ENCODE measurements at regions of chr4 and their contacts with region 1.

Region 1: DNA sequence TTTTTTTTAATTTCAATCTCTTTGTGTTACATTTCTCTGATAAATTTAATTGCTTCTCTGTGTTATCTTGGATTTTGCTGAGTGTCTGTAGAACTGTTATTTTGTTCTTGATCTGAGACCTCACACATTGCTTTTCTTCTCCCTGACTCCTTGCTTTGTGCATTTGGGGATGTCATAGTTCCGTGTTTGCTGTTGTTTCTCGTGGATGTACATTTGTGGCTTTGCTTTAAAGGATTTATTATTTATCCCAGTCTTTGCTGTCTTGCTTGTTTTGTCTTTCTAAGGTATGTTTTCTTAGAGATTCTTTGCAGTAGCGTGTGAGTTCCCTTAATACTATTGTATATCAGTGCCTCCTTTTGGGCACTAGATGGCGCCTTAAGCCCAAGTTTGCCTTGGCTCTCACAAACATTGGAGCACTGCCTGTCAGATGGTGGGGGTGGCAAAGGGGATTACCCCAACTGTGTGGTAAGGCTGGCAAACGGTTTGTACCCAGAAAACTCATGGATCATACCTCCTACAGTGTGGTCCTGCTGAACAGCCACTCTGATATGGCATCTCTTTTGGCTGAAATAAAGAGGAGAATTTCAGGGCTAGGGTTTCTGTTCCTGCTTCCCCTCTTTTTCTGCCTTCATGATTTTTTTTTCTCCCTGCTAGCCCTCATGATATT is 96.4 kb downstream of the PGRMC2 start:
- DNase-seq: peak; percentile 84
- ATAC-seq: peak; percentile 100
- H3K4me3 Mint-ChIP-seq: no peak overlapping the region
- H3K27ac Mint-ChIP-seq: no peak overlapping the region
- H3K4me1 Mint-ChIP-seq: no peaks in the 10 kb centered on the region
- H3K27me3 Mint-ChIP-seq: no peaks in the 10 kb centered on the region

Region 2: DNA sequence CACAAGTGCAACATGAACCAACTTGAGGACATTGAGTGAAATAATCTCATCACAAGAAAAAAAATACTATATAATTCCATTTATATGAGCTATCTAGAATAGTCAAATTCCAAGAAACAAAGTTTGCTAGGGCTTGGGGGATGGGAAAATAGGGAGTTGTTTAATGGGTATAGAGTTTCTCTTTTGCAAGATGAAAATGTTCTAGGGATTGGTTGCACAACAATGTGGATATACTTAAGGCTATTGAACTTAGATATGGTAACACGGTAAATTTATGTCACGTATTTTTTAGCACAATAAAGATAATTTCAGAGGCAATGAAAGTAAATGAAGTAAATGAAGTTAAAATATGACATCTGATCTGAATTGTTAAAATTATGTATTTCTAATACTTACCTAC is 234.1 kb before region 1 on chr4:
- CTCF ChIA-PET with region 1: no interaction called
- POLR2A ChIA-PET with region 1: no interaction called
- intact Hi-C with region 1: no loop called
- DNase-seq: no peak
- ATAC-seq: no peak
- H3K4me3 Mint-ChIP-seq: no peak overlapping the region
- H3K27ac Mint-ChIP-seq: no peak overlapping the region
- H3K4me1 Mint-ChIP-seq: peaks cover 8% of the 10 kb centered on the region
- H3K27me3 Mint-ChIP-seq: no peaks in the 10 kb centered on the region

Region 3: DNA sequence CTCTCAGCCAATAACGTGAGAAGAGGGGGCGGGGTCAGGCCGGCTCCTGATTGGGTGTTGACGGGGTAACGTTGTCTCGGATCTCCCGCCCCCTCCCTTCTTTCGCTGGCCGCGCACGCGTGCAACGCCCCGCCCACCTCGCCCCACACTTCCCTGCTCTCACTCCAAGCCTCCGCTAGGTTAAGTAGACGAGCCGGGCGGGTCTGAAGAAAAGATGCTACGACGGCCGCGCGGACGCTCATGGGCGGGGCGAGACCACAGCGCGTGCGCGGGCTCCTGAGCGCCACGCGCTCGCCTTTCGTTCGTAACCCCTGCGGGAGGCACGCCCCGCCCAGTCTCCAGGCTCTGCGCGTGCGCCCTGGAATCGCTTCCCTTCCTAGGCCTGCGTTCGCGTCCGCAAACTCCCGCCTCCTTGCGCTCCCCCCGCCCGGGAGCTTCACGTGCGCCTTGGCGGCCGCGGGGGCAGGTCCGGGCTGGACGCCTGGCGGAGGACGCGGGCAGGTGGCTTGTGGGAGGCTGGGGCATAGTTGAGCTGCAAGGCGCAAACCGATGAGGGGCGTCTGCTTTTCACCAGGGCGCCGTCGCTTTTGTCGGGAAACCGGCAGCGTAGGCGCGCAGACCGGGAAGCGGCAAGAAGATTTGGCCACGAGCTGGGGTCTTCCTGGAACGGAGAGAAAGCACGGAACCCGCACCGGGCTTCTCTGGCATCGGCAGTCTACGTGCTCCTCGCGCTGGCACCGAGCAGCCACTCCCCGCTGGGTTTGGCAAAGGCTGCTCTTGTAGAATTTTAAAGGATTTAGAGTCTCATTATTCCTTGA is 96.8 kb after region 1 on chr4:
- CTCF ChIA-PET with region 1: no interaction called
- POLR2A ChIA-PET with region 1: interaction called, 4 read pairs
- intact Hi-C with region 1: loop called in 1 of 2 experiments (anchors 5 kb)
- DNase-seq: peak; percentile 100
- ATAC-seq: peak; percentile 85
- H3K4me3 Mint-ChIP-seq: peak overlapping the region; percentile 79
- H3K27ac Mint-ChIP-seq: peak overlapping the region; percentile 93
- H3K4me1 Mint-ChIP-seq: peaks cover 27% of the 10 kb centered on the region
- H3K27me3 Mint-ChIP-seq: no peaks in the 10 kb centered on the region

Region 4: GRCh38 chr4:128553686-128554515 is 362.7 kb after region 1 on chr4:
- CTCF ChIA-PET with region 1: no interaction called
- POLR2A ChIA-PET with region 1: no interaction called
- intact Hi-C with region 1: loop called in 1 of 2 experiments (anchors 5 kb)
- DNase-seq: no peak
- ATAC-seq: peak; percentile 8
- H3K4me3 Mint-ChIP-seq: peak overlapping the region; percentile 76
- H3K27ac Mint-ChIP-seq: no peak overlapping the region
- H3K4me1 Mint-ChIP-seq: peaks cover 13% of the 10 kb centered on the region
- H3K27me3 Mint-ChIP-seq: peaks cover 8% of the 10 kb centered on the region

Region 5: GRCh38 chr4:128863312-128864075 is 672.2 kb after region 1 on chr4:
- CTCF ChIA-PET with region 1: interaction called, 3 read pairs
- POLR2A ChIA-PET with region 1: no interaction called
- intact Hi-C with region 1: loop called (anchors 1 kb)
- DNase-seq: peak; percentile 79
- ATAC-seq: no peak
- H3K4me3 Mint-ChIP-seq: no peak overlapping the region
- H3K27ac Mint-ChIP-seq: peak overlapping the region; percentile 80
- H3K4me1 Mint-ChIP-seq: peaks cover 46% of the 10 kb centered on the region
- H3K27me3 Mint-ChIP-seq: no peaks in the 10 kb centered on the region

Region 6: DNA sequence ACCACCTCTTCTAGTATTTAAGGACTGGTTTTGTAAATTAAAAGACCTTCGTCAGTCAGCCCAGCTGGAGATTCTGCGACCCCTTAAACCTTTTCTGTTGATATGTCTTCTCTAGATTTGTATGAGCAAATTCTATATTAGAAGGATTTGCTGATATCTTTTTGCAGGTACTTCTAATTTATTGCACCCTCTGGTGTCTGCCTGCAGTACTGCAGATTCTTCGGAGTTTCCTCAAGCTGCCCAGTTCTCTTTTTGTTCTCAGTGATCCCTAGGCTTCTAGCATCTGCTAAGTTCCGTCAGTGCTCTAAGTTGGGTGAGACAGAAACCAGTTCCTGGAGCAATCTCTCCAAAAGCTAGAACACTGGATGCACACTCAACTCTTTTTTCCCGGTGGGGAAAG is 1449.9 kb after region 1 on chr4:
- CTCF ChIA-PET with region 1: no interaction called
- POLR2A ChIA-PET with region 1: no interaction called
- intact Hi-C with region 1: loop called in 1 of 2 experiments (anchors 10 kb)
- DNase-seq: peak; percentile 70
- ATAC-seq: no peak
- H3K4me3 Mint-ChIP-seq: no peak overlapping the region
- H3K27ac Mint-ChIP-seq: no peak overlapping the region
- H3K4me1 Mint-ChIP-seq: no peaks in the 10 kb centered on the region
- H3K27me3 Mint-ChIP-seq: no peaks in the 10 kb centered on the region

Measured in activated CD4-positive, alpha-beta T cell treated with anti-CD3 and anti-CD28 coated beads for 36 hours (primary cell).